CD4-positive, alpha-beta memory T cell (primary cell): ENCODE measurements at regions of chr19 and their contacts with region 1.

Region 1: DNA sequence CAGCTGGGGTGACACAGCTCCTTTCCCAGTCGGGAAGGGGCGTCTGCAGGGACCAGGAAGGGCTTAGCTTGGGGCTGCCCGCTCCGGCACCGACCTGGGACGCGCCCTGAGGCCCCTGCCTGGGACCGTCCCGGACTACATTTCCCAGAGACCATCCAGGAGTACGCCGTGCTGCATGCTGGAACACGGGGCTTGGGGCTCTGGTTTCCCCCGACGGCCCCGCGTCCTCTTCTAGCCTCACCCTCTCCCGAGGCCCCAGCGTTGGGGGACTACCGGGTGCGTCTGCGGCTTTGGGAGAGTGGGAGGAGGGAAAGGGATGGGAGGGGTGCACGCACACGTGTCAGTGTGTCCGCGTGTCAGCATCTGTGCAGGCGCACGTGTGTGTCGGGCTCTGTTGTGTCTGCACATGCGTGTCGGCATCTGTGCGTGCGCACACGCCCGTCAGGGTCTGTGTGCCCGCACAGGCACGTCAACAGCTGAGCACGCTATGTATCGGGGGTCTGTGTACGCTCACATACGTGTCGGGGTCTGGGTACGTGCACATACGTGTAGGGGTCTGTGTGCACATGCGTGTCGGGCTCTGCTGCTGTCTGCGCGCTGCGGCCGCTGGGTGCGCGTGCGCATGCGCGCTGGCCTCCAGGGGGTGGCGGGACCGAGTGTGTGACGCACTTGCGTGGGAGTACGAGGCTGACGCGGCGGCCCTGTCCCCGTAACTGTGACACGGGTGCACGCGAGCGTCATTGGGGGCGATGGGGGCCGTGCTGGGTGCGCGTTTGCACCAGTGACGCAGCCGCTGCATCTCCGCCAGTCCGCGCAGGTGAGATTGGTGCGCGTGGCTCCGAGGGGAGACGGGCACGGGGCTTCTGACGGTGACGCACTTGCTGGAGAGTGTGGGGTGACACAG is at the start of gene ZNF331:
- DNase-seq: peak; percentile 93 to 97 (median 96)
- H3K4me3 ChIP-seq: peak within 1 kb of the TSS; percentile 31 to 83
- H3K4me3 Mint-ChIP-seq: peak within 1 kb of the TSS; percentile 94 to 99 (median 97)
- H3K27ac ChIP-seq: peak within 1 kb of the TSS; percentile 97
- H3K27ac Mint-ChIP-seq: peak within 1 kb of the TSS; percentile 95 to 100 (median 99)
- H3K4me1 ChIP-seq: peaks cover 17% of the 10 kb centered on the region
- H3K4me1 Mint-ChIP-seq: peaks cover 10 to 48% (median 22%) of the 10 kb centered on the region in 4 donors
- H3K27me3 ChIP-seq: no peaks in the 10 kb centered on the region
- H3K27me3 Mint-ChIP-seq: peaks cover 0 to 4% of the 10 kb centered on the region in 2 donors
- total RNA-seq, gene ZNF331: 56.5 to 58.3 TPM

Region 2: GRCh38 chr19:53553884-53554791 is 16.4 kb after region 1 on chr19:
- CTCF ChIA-PET with region 1: no interaction called
- POLR2A ChIA-PET with region 1: interaction called, 3 read pairs
- intact Hi-C with region 1: loop called (anchors 1 kb)
- DNase-seq: peak; percentile 91 to 97 (median 96)
- H3K4me3 ChIP-seq: peak overlapping the region; percentile 36 to 66
- H3K4me3 Mint-ChIP-seq: peak overlapping the region; percentile 97 to 99 (median 98)
- H3K27ac ChIP-seq: peak overlapping the region; percentile 94
- H3K27ac Mint-ChIP-seq: peak overlapping the region; percentile 98 to 100 (median 100)
- H3K4me1 ChIP-seq: peaks cover 14% of the 10 kb centered on the region
- H3K4me1 Mint-ChIP-seq: peaks cover 11 to 33% (median 21%) of the 10 kb centered on the region in 4 donors
- H3K27me3 ChIP-seq: no peaks in the 10 kb centered on the region
- H3K27me3 Mint-ChIP-seq: no peaks in the 10 kb centered on the region